ENCODE measurements at regions of chr14 and their contacts with region 1.

Region 1: DNA sequence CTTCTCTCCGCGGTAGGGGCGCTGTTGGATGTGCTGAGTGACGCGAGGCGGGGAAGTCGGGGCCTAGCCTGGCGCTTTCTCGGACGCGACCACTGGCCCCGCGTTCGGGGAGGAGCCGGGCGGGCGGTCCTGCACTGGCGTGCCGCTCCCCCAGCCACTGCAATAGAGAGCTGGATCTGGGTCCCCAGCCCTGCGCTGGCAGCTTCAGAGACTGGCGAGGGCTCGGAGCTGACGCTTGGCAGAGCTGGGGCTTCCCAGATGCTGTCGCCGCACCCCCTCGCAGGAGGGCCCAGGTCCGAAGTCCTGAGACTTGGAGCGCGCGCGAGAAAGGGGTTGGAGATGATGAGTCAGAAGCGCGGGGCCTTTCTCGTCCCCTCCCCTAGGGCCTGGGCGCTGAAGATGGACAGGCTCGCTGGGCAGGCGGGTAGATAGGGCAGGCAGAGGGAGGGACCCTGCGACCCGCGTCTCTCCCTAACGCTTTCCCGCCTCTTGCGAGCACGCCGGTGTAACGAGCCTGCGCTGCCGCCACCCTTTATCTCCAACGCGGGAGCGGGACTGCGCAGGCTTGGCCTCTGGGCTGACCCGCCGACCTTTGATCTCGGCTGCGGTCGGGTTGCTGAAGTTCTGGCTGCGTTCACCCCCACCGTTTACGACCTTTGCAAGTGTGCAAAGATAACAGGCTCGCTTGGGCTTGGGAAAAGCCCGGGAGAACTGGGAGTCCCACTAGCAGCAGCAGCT is 3.0 kb downstream of the TMEM253 start:
- DNase-seq: peak; percentile 89 to 96 (median 92)
- ATAC-seq: peak; percentile 82
- H3K4me3 ChIP-seq: peak overlapping the region; percentile 78
- H3K4me3 Mint-ChIP-seq: peak overlapping the region; percentile 86
- H3K27ac ChIP-seq: peak overlapping the region; percentile 97
- H3K27ac Mint-ChIP-seq: peak overlapping the region; percentile 85
- H3K4me1 ChIP-seq: peaks cover 24% of the 10 kb centered on the region
- H3K4me1 Mint-ChIP-seq: peaks cover 38% of the 10 kb centered on the region
- H3K27me3 ChIP-seq: no peaks in the 10 kb centered on the region
- H3K27me3 Mint-ChIP-seq: no peaks in the 10 kb centered on the region
- CTCF ChIP-seq: no peak

Region 2: GRCh38 chr14:20690848-20691523 is 412.9 kb before region 1 on chr14:
- CTCF ChIA-PET with region 1: interaction called, 6 read pairs
- POLR2A ChIA-PET with region 1: no interaction called
- intact Hi-C with region 1: loop called in 1 of 2 experiments (anchors 10 kb)
- DNase-seq: peak in 10 of 14 experiments; percentile 7 to 85 (median 30)
- ATAC-seq: peak; percentile 99
- H3K4me3 ChIP-seq: no peak overlapping the region
- H3K4me3 Mint-ChIP-seq: no peak overlapping the region
- H3K27ac ChIP-seq: no peak overlapping the region
- H3K27ac Mint-ChIP-seq: no peak overlapping the region
- H3K4me1 ChIP-seq: no peaks in the 10 kb centered on the region
- H3K4me1 Mint-ChIP-seq: peaks cover 6% of the 10 kb centered on the region
- H3K27me3 ChIP-seq: no peaks in the 10 kb centered on the region
- H3K27me3 Mint-ChIP-seq: no peaks in the 10 kb centered on the region
- CTCF ChIP-seq: peak; percentile 93

Region 3: GRCh38 chr14:20970983-20971704 is 132.7 kb before region 1 on chr14:
- CTCF ChIA-PET with region 1: interaction called, 13 read pairs
- POLR2A ChIA-PET with region 1: interaction called, 4 read pairs
- intact Hi-C with region 1: no loop called
- DNase-seq: peak; percentile 55 to 90 (median 70)
- ATAC-seq: peak; percentile 87
- H3K4me3 ChIP-seq: peak overlapping the region; percentile 69
- H3K4me3 Mint-ChIP-seq: peak overlapping the region; percentile 93
- H3K27ac ChIP-seq: no peak overlapping the region
- H3K27ac Mint-ChIP-seq: no peak overlapping the region
- H3K4me1 ChIP-seq: peaks cover 15% of the 10 kb centered on the region
- H3K4me1 Mint-ChIP-seq: peaks cover 15% of the 10 kb centered on the region
- H3K27me3 ChIP-seq: peaks cover 12% of the 10 kb centered on the region in 2 experiments
- H3K27me3 Mint-ChIP-seq: peaks cover 39% of the 10 kb centered on the region
- CTCF ChIP-seq: peak; percentile 89

Region 4: DNA sequence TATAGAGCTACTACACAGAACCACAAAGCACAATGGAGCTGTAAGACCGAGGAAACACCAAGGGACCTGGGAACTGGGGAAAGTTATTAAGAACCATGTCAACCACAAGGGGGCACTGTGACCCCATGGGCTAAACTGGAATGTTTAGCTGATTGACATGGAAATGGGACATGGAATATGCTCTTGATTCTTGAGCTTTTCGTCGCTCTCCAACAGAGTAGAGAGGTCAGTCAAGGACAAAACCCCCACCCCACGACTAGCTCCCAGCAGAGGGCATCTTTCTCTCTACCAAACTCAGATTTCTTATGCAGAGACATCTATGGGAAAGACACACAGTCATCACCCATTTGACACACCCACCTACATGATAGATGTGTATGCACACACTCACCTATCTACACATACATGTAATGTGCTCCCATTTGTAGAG is 89.1 kb before region 1 on chr14:
- CTCF ChIA-PET with region 1: interaction called, 94 read pairs
- POLR2A ChIA-PET with region 1: interaction called, 34 read pairs
- intact Hi-C with region 1: loop called (anchors 1 kb)
- DNase-seq: peak; percentile 67 to 91 (median 78)
- ATAC-seq: peak; percentile 87
- H3K4me3 ChIP-seq: no peak overlapping the region
- H3K4me3 Mint-ChIP-seq: no peak overlapping the region
- H3K27ac ChIP-seq: no peak overlapping the region
- H3K27ac Mint-ChIP-seq: no peak overlapping the region
- H3K4me1 ChIP-seq: no peaks in the 10 kb centered on the region
- H3K4me1 Mint-ChIP-seq: no peaks in the 10 kb centered on the region
- H3K27me3 ChIP-seq: peaks cover 0 to 6% of the 10 kb centered on the region in 2 experiments
- H3K27me3 Mint-ChIP-seq: peaks cover 23% of the 10 kb centered on the region
- CTCF ChIP-seq: peak; percentile 95

Region 5: DNA sequence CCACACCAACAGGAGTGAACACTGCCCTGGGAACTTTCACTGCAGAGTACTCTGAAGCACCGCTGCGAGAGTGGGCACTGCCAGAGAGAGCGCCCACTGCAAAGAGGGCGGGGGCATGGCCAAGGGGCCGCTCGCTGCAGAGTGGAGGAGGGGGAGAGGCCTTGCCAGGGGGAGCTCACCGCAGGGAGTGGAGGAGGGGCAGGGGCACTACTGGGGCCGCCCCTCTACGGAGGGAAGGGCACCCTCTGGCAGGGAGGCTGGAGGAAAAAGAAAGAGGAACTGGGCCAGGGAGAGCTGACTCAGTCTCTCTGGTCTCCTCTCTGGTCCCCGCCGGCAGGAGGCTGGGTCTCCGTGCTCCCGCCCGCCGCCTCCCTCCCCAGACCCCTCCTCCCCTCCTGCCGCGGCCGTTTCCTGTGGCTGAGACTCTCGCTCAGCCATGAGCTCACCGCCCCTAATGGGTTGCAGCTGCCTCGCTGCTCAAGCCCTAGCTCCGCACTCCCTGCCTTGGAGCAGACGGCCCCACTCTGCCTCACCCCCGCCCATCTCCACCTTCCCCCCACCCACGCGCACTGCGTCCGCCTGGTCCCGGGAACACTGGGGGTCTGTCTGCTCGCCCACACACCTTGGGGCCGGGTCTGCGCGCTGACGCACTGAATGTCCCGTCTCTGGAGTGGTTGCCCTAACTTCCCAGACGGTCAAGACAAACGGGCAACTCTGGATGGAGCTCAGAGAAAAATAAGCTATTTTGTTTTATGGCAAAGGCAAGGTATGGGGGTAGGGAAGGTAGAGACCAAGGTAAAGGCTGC is 32.5 kb before region 1 on chr14:
- CTCF ChIA-PET with region 1: interaction called, 66 read pairs
- POLR2A ChIA-PET with region 1: interaction called, 37 read pairs
- intact Hi-C with region 1: loop called (anchors 1 kb)
- DNase-seq: peak in 8 of 14 experiments; percentile 19 to 76 (median 50)
- ATAC-seq: peak; percentile 37
- H3K4me3 ChIP-seq: peak overlapping the region; percentile 51
- H3K4me3 Mint-ChIP-seq: peak overlapping the region; percentile 86
- H3K27ac ChIP-seq: no peak overlapping the region
- H3K27ac Mint-ChIP-seq: no peak overlapping the region
- H3K4me1 ChIP-seq: peaks cover 37% of the 10 kb centered on the region
- H3K4me1 Mint-ChIP-seq: peaks cover 37% of the 10 kb centered on the region
- H3K27me3 ChIP-seq: peaks cover 40 to 59% of the 10 kb centered on the region in 2 experiments
- H3K27me3 Mint-ChIP-seq: peaks cover 71% of the 10 kb centered on the region
- CTCF ChIP-seq: no peak

Region 6: GRCh38 chr14:21269252-21270046 is 165.6 kb after region 1 on chr14 and contains the start of gene HNRNPC:
- CTCF ChIA-PET with region 1: no interaction called
- POLR2A ChIA-PET with region 1: no interaction called
- intact Hi-C with region 1: loop called in 1 of 2 experiments (anchors 5 kb)
- DNase-seq: peak; percentile 100
- ATAC-seq: peak; percentile 86
- H3K4me3 ChIP-seq: peak within 1 kb of the TSS; percentile 83
- H3K4me3 Mint-ChIP-seq: peak within 1 kb of the TSS; percentile 94
- H3K27ac ChIP-seq: peak within 1 kb of the TSS; percentile 95 to 97
- H3K27ac Mint-ChIP-seq: peak within 1 kb of the TSS; percentile 95
- H3K4me1 ChIP-seq: peaks cover 29% of the 10 kb centered on the region
- H3K4me1 Mint-ChIP-seq: peaks cover 45% of the 10 kb centered on the region
- H3K27me3 ChIP-seq: no peaks in the 10 kb centered on the region
- H3K27me3 Mint-ChIP-seq: no peaks in the 10 kb centered on the region
- CTCF ChIP-seq: no peak
- total RNA-seq, gene HNRNPC: 507 to 528 TPM

Measured in CD4-positive, alpha-beta T cell (primary cell).